IMR-90 (cell line): ENCODE measurements at regions of chr10 and their contacts with region 1.

Region 1: GRCh38 chr10:125812128-125812750 is 10.8 kb downstream of the UROS start:
- DNase-seq: peak; percentile 58
- ATAC-seq: no peak
- H3K4me3 ChIP-seq: no peak overlapping the region
- H3K27ac ChIP-seq: no peak overlapping the region
- H3K4me1 ChIP-seq: no peaks in the 10 kb centered on the region
- H3K27me3 ChIP-seq: no peaks in the 10 kb centered on the region
- CTCF ChIP-seq: no peak
- POLR2A ChIP-seq: no peak
- RAD21 ChIP-seq: no peak

Region 2: DNA sequence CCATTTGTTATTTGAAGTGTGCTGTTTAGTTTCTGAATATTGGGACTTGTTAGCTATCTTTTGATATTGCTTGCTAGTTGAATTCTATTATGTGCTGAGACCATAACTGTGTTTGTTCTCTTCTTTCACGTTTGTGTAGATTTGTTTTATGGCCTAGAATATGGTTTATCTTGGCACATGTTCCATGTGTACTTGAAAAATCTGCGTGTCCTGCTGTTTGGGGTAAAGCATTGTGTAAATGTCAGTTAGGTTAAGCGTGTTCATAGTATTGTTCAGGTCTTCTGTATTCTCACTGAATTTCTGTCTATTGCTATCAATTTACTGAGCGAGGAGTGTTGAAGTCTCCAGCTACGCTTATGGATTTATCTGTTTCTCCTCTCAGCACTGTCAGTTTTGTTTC is 56.0 kb before region 1 on chr10:
- CTCF ChIA-PET with region 1: no interaction called
- POLR2A ChIA-PET with region 1: no interaction called
- dilution Hi-C with region 1: no loop called
- in situ Hi-C with region 1: no loop called
- intact Hi-C with region 1: loop called (anchors 5 kb)
- DNase-seq: no peak
- ATAC-seq: no peak
- H3K4me3 ChIP-seq: no peak overlapping the region
- H3K27ac ChIP-seq: no peak overlapping the region
- H3K4me1 ChIP-seq: no peaks in the 10 kb centered on the region
- H3K27me3 ChIP-seq: no peaks in the 10 kb centered on the region
- CTCF ChIP-seq: no peak
- POLR2A ChIP-seq: no peak
- RAD21 ChIP-seq: no peak